B cell (primary cell): ENCODE measurements at regions of chr7 and their contacts with region 1.

Region 1: GRCh38 chr7:100673300-100673941 is at the start of gene GNB2:
- DNase-seq: peak; percentile 99
- ATAC-seq: peak; percentile 65
- H3K4me3 ChIP-seq: peak within 1 kb of the TSS; percentile 53 to 99 (median 98)
- H3K4me3 Mint-ChIP-seq: peak within 1 kb of the TSS; percentile 96
- H3K27ac ChIP-seq: peak within 1 kb of the TSS; percentile 89 to 97
- H3K27ac Mint-ChIP-seq: peak within 1 kb of the TSS; percentile 97
- H3K4me1 ChIP-seq: peaks cover 0 to 6% of the 10 kb centered on the region in 2 donors
- H3K4me1 Mint-ChIP-seq: peaks cover 8% of the 10 kb centered on the region
- H3K27me3 ChIP-seq: no peaks in the 10 kb centered on the region
- H3K27me3 Mint-ChIP-seq: no peaks in the 10 kb centered on the region
- CTCF ChIP-seq: no peak
- total RNA-seq, gene GNB2: 127 TPM in 2 replicates

Region 2: DNA sequence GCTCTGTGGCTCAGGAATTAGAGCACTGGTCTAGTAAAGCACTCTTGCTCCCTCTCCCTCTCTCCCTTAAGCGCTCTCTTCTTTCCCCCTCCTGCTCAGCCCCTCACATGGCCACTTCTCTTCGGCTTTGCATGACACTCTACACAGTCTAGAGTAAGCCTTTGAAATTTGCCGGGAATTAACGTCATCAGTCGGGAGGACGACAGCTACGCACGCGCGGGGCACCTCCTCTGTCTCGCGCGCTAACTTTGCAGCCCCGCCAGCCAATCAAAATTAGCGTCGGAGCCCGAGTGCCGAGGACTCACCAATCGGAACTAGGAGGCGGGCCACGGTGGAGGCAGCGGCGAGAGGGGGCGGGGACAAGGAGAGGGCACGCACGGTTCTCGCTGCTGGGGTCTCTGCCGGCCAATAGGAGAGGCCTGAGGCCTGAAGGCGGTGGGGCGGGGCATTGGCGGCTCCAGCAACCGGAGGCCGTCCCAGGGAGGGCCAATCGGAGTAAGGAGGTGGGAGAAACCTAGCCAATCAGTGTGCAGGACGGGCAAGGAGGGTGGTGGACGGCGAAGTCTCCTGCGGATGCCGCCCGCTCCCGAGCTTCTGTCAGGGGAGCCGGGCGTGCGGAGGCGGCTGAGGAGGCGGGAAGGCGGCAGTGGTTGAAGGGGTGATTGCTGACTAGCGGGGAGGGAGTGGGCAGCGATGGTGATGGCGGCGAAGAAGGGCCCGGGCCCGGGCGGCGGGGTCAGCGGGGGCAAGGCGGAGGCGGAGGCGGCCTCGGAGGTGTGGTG is 134.6 kb before region 1 on chr7 and contains the start of gene AGFG2:
- CTCF ChIA-PET with region 1: no interaction called
- POLR2A ChIA-PET with region 1: no interaction called
- intact Hi-C with region 1: loop called (anchors 2 kb)
- DNase-seq: peak; percentile 100
- ATAC-seq: peak; percentile 97
- H3K4me3 ChIP-seq: peak within 1 kb of the TSS; percentile 62 to 84 (median 72)
- H3K4me3 Mint-ChIP-seq: peak within 1 kb of the TSS; percentile 91
- H3K27ac ChIP-seq: peak within 1 kb of the TSS in 1 of 2 donors; percentile 42
- H3K27ac Mint-ChIP-seq: peak within 1 kb of the TSS; percentile 76
- H3K4me1 ChIP-seq: peaks cover 14 to 23% of the 10 kb centered on the region in 2 donors
- H3K4me1 Mint-ChIP-seq: peaks cover 36% of the 10 kb centered on the region
- H3K27me3 ChIP-seq: no peaks in the 10 kb centered on the region
- H3K27me3 Mint-ChIP-seq: no peaks in the 10 kb centered on the region
- CTCF ChIP-seq: no peak
- total RNA-seq, gene AGFG2: 11.0 and 11.6 TPM in 2 replicates

Region 3: GRCh38 chr7:100626530-100627237 is 46.7 kb before region 1 on chr7:
- CTCF ChIA-PET with region 1: interaction called, 4 read pairs
- POLR2A ChIA-PET with region 1: no interaction called
- intact Hi-C with region 1: loop called (anchors 1 kb)
- DNase-seq: peak; percentile 83
- ATAC-seq: peak; percentile 99
- H3K4me3 ChIP-seq: peak overlapping the region in 4 of 5 experiments; percentile 21 to 53 (median 44)
- H3K4me3 Mint-ChIP-seq: peak overlapping the region; percentile 80
- H3K27ac ChIP-seq: peak overlapping the region in 1 of 2 donors; percentile 55
- H3K27ac Mint-ChIP-seq: no peak overlapping the region
- H3K4me1 ChIP-seq: peaks cover 12 to 13% of the 10 kb centered on the region in 2 donors
- H3K4me1 Mint-ChIP-seq: peaks cover 11% of the 10 kb centered on the region
- H3K27me3 ChIP-seq: no peaks in the 10 kb centered on the region
- H3K27me3 Mint-ChIP-seq: no peaks in the 10 kb centered on the region
- CTCF ChIP-seq: no peak

Region 4: DNA sequence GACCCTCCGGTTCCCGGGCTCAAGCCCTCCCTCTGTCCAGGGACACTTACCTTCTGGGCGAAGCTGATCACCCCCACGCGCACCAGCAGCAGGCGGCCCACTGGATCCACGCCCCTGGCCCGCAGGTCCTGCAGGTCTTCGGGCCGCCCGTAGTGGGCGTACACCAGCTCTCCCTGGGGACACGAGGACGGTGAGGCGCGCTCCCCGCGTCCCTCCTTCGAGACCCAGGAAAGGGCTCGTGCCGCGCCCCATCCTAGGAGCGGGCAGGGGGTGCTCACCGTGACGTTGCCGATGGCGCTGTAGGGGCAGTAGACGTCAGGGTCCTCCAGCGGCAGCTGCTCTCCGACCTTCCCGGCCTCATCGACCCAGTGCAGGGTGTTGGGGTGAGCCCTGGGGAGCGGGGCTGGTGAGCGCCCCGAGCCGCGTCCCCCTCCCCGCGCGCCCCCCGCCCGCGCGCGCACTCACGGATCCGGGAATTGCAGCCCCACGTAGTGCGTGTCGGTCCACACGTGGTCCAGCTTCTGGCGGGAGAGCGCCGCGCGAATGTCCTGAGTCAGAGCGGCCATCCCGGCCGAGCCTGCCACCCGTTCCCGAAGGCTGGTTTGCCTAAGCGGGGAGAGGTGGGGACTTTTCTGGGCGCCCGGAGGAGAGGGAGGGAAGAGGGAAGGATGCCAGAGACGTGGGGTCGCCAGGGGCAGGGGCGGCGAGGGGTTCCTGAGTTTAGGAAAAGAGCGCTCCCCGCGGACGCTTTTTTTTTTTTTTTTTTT is 40.3 kb before region 1 on chr7:
- CTCF ChIA-PET with region 1: interaction called, 5 read pairs
- POLR2A ChIA-PET with region 1: interaction called, 5 read pairs
- intact Hi-C with region 1: loop called (anchors 1 kb)
- DNase-seq: peak; percentile 77
- ATAC-seq: peak; percentile 77
- H3K4me3 ChIP-seq: peak overlapping the region in 4 of 5 experiments; percentile 62 to 82 (median 72)
- H3K4me3 Mint-ChIP-seq: peak overlapping the region; percentile 90
- H3K27ac ChIP-seq: peak overlapping the region in 1 of 2 donors; percentile 48
- H3K27ac Mint-ChIP-seq: peak overlapping the region; percentile 83
- H3K4me1 ChIP-seq: peaks cover 6 to 15% of the 10 kb centered on the region in 2 donors
- H3K4me1 Mint-ChIP-seq: peaks cover 10% of the 10 kb centered on the region
- H3K27me3 ChIP-seq: peaks cover 0 to 3% (median 0%) of the 10 kb centered on the region in 4 experiments
- H3K27me3 Mint-ChIP-seq: no peaks in the 10 kb centered on the region
- CTCF ChIP-seq: no peak

Region 5: DNA sequence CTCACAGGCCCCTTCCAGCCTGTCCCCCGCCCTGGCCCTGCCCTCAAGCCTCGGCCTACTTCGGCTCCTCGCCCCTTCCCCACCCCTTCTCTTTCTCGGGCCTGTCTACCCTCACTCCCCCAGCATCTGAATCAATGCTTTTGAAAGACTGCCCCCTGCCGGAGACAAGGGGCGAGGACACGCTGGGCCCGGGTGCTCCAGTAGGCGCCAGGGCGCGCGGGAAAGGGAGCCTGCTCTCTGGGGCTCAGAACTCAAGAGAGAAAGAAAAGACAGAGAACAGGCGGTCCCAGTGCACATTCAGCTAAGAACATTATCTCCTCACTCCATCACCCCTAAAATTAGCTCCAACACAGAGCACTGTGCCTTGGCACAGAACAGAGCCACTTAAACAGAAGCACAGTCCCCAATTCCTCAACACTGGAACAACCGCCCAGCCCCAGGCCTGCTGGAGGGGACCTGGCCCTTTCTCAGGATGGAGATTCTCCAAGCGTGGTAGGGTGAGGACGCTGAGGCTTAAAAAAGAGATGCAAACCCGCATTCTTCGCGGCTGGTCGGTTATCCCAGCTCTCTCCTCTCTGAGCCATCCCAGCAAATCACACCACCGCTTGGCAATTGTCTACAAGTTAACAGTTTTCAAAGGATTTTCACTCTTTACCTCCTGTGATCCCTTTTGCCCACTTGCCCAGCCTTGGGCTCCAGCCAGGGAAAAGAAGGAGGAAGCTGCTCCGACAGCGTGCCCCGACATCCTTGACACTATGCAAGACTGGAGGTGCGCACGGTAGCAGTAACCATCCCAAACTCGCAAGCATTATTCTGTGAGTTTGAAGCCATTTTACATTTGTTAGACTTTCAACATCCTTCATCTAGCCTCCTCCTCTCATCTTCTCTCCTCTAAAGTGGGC is 18.5 kb after region 1 on chr7:
- CTCF ChIA-PET with region 1: interaction called, 53 read pairs
- POLR2A ChIA-PET with region 1: interaction called, 9 read pairs
- intact Hi-C with region 1: loop called (anchors 1 kb)
- DNase-seq: peak; percentile 86
- ATAC-seq: peak; percentile 60
- H3K4me3 ChIP-seq: peak overlapping the region in 2 of 5 experiments; percentile 58 to 79
- H3K4me3 Mint-ChIP-seq: peak overlapping the region; percentile 89
- H3K27ac ChIP-seq: no peak overlapping the region
- H3K27ac Mint-ChIP-seq: peak overlapping the region; percentile 92
- H3K4me1 ChIP-seq: peaks cover 52 to 55% of the 10 kb centered on the region in 2 donors
- H3K4me1 Mint-ChIP-seq: peaks cover 51% of the 10 kb centered on the region
- H3K27me3 ChIP-seq: no peaks in the 10 kb centered on the region
- H3K27me3 Mint-ChIP-seq: no peaks in the 10 kb centered on the region
- CTCF ChIP-seq: peak; percentile 88